ENCODE measurements at regions of chr9 and their contacts with region 1.

Region 1: DNA sequence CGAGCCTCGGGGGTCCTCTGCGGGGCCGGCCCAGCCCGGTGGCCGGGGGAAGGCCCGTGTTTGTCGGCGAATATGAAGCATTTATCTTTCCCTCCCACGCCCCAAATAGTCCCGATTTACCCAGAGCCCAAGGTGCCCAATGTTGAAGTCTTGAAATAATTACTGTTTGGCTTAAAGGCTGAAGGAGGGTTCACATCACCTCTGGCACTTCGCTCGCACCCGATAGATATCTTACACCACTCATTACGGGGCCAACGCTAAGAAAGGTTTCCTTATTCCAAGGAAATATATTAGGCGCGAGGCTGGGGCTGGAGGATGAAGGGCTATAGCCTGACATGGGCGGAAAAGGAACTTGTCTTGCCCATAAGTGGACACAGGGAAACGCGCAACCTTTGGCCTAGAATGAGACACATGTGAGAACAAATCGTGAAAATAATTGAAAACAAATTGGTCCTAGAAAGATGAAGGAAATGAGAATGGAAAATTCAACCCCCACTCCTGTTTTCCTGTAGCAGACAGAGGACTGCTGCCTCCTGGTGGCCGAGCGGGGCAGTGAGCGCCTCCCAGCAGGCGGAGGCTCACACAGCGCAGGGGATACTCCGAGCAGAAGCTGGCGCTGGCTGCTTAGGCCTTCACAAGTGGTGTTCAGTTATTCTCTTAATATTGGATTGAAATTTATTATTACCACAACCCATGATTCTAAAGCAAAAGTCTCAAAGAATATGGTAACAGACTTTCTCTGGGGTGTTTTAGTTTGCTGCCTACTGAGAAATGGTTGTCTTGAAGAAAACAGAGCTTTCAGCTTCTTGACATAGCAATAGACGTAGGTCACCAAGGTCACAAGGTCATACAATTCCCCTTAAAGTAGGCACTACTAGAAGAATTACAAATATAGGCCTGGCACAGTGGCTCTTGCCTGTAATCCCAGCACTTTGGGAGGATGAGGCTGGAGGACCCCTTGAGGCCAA is 7.9 kb downstream of the CCL21 start:
- DNase-seq: peak; percentile 42
- H3K4me3 ChIP-seq: peak overlapping the region; percentile 62
- H3K27ac ChIP-seq: no peak overlapping the region
- H3K27me3 ChIP-seq: peaks cover 14% of the 10 kb centered on the region
- CTCF ChIP-seq: peak; percentile 99

Region 2: GRCh38 chr9:34646211-34647083 is 55.6 kb before region 1 on chr9 and contains the start of gene GALT:
- CTCF ChIA-PET with region 1: interaction called, 12 read pairs
- POLR2A ChIA-PET with region 1: no interaction called
- DNase-seq: peak; percentile 45
- H3K4me3 ChIP-seq: peak within 1 kb of the TSS; percentile 93
- H3K27ac ChIP-seq: peak within 1 kb of the TSS; percentile 75
- H3K27me3 ChIP-seq: no peaks in the 10 kb centered on the region
- CTCF ChIP-seq: peak; percentile 68
- polyA plus RNA-seq, gene GALT: 24.8 and 28.4 TPM in 2 replicates

Region 3: DNA sequence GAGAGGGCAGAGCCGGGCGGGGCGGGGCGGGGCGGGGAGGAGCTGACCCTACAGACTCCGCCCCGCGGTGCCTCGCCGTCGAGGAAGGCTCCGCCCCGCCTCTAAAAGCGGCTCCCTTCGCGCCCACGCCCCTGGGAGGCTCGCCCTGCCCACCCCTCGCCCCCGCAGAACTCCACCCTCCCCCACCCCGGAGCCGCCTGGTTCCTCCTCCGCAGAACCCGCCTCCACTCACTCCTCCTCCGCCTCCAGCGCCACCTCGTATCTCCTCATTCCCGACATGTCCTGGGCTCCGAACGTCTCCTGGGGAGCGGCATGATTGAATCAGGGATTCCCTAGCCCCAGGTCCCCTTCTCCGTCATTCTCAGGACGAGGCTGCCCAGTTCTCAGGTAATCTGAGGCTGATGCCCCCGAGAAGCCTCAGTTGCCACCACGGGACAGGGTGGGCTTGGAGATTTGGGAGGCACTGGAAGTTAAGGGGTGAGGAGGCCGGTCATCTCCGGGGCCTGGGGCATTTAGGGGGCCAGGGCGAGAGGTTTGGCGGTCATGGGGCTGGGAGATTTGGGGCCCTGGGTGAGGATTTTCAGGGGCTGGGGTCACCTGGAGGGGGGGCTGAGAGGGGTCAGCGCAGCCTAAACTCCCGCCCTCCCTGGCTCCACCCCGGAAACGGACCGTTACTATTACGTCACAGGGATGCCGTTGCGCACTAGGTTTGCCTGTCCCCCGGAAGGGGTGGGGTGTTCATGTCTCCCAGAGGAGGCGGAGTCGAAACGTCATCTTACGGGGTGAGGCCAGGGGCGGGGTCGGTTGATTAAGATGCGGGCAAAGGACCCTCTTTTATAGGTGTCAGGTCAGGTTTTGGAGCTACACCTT is 36.4 kb before region 1 on chr9:
- CTCF ChIA-PET with region 1: interaction called, 11 read pairs
- POLR2A ChIA-PET with region 1: no interaction called
- DNase-seq: peak; percentile 85
- H3K4me3 ChIP-seq: peak overlapping the region; percentile 95
- H3K27ac ChIP-seq: peak overlapping the region; percentile 96
- H3K27me3 ChIP-seq: no peaks in the 10 kb centered on the region
- CTCF ChIP-seq: no peak

Region 4: GRCh38 chr9:34675048-34675714 is 26.9 kb before region 1 on chr9:
- CTCF ChIA-PET with region 1: interaction called, 22 read pairs
- POLR2A ChIA-PET with region 1: no interaction called
- DNase-seq: no peak
- H3K4me3 ChIP-seq: no peak overlapping the region
- H3K27ac ChIP-seq: no peak overlapping the region
- H3K27me3 ChIP-seq: no peaks in the 10 kb centered on the region
- CTCF ChIP-seq: peak; percentile 80

Region 5: GRCh38 chr9:34686231-34686630 is 15.8 kb before region 1 on chr9:
- CTCF ChIA-PET with region 1: interaction called, 25 read pairs
- POLR2A ChIA-PET with region 1: no interaction called
- DNase-seq: no peak
- H3K4me3 ChIP-seq: no peak overlapping the region
- H3K27ac ChIP-seq: no peak overlapping the region
- H3K27me3 ChIP-seq: no peaks in the 10 kb centered on the region
- CTCF ChIP-seq: no peak

Region 6: GRCh38 chr9:34690983-34691935 is 10.8 kb before region 1 on chr9 and contains the start of gene CCL19:
- CTCF ChIA-PET with region 1: interaction called, 25 read pairs
- POLR2A ChIA-PET with region 1: no interaction called
- DNase-seq: no peak
- H3K4me3 ChIP-seq: no peak within 1 kb of the TSS
- H3K27ac ChIP-seq: no peak within 1 kb of the TSS
- H3K27me3 ChIP-seq: peaks cover 2% of the 10 kb centered on the region
- CTCF ChIP-seq: no peak
- polyA plus RNA-seq, gene CCL19: not detected in 2 replicates

Region 7: DNA sequence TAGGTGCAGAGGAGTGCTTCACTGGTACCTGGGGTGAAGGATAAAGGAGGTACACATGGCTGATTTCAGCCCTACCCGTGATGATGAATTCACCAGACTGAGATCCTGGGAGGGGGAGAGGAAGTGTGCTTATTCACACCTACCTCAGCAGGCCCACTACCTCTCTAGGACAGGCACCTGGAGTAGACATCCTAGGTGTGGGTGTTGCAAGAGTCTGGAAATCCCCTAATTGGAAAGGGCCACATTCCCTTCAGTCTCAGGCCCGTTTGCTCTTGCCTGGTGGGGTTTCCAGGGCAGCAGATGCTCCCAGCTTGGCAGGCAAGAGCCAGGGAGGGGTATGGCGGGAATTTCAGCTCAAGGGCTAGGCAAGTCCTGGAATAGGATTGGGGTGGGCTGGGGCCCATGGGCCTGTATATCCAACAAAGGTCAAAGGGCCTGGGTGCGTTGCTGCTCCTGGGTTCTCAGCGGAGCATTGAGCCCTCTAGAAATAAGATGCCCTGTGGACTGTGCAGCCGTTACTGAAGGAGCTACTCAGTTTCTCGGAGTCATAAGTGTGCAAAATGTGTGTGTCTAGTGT is 13.7 kb after region 1 on chr9:
- CTCF ChIA-PET with region 1: interaction called, 40 read pairs
- POLR2A ChIA-PET with region 1: no interaction called
- DNase-seq: no peak
- H3K4me3 ChIP-seq: no peak overlapping the region
- H3K27ac ChIP-seq: no peak overlapping the region
- H3K27me3 ChIP-seq: peaks cover 26% of the 10 kb centered on the region
- CTCF ChIP-seq: no peak